Endothelial cell of umbilical vein (primary cell): ENCODE measurements at regions of chr19 and their contacts with region 1.

Region 1: DNA sequence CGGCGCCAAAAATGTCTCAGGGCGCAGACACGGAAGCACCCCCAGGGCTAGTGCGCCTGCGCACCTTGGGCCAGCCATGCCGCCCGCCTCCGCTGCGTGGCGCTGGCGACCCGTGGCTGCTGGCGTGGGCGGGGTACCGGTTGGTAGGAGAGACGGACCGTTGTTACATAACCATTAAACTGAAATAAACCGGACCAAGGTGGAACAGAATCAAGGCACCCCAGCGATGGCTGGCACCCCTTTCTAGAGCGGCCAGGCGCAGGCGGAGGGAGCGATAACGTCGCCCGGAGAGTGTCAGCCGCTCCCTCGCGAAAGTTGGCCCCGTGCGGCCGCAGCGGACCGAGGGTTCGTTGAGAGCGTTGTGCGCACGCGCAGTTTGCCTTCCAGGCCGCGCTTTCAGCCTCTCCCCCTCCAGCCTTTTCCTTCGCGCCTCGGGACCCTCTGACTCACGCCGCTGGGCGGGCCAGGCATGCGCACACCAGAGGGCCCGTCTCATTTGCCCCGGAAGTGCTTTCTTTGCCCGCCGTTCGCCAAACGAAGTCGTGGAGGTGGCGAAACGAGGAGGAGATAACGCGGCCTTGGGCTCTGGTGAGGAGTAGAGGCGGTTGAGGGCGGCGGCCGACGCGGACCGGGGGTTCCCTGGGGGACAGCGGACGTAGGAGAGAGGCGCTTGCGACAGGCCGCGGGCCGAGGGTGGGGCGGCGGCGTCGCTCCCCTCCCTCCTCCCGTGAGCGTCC is at the starts of genes PLEKHJ1 and SF3A2:
- DNase-seq: peak; percentile 99
- H3K4me3 ChIP-seq: peak within 1 kb of the TSS; percentile 56 to 86 (median 80)
- H3K27ac ChIP-seq: peak within 1 kb of the TSS; percentile 66
- H3K4me1 ChIP-seq: peaks cover 41% of the 10 kb centered on the region
- H3K27me3 ChIP-seq: no peaks in the 10 kb centered on the region
- CTCF ChIP-seq: peak; percentile 99
- POLR2A ChIP-seq: peak; percentile 71
- total RNA-seq, gene PLEKHJ1: 73.4 and 82.4 TPM in 2 replicates
- total RNA-seq, gene SF3A2: 140 and 164 TPM in 2 replicates

Region 2: GRCh38 chr19:2253106-2254053 is 16.9 kb after region 1 on chr19:
- CTCF ChIA-PET with region 1: interaction called, 13 read pairs
- POLR2A ChIA-PET with region 1: interaction called, 3 read pairs
- dilution Hi-C with region 1: no loop called
- intact Hi-C with region 1: loop called (anchors 1 kb)
- DNase-seq: no peak
- H3K4me3 ChIP-seq: no peak overlapping the region
- H3K27ac ChIP-seq: no peak overlapping the region
- H3K4me1 ChIP-seq: peaks cover 11% of the 10 kb centered on the region
- H3K27me3 ChIP-seq: peaks cover 22 to 40% of the 10 kb centered on the region in 2 experiments
- CTCF ChIP-seq: peak in 1 of 2 donors; percentile 45
- POLR2A ChIP-seq: no peak

Region 3: GRCh38 chr19:2269244-2269947 is 32.9 kb after region 1 on chr19:
- CTCF ChIA-PET with region 1: interaction called, 17 read pairs
- POLR2A ChIA-PET with region 1: interaction called, 4 read pairs
- dilution Hi-C with region 1: no loop called
- intact Hi-C with region 1: loop called (anchors 1 kb)
- DNase-seq: peak; percentile 95
- H3K4me3 ChIP-seq: peak overlapping the region; percentile 66 to 95 (median 92)
- H3K27ac ChIP-seq: peak overlapping the region; percentile 57
- H3K4me1 ChIP-seq: peaks cover 38% of the 10 kb centered on the region
- H3K27me3 ChIP-seq: no peaks in the 10 kb centered on the region
- CTCF ChIP-seq: no peak
- POLR2A ChIP-seq: peak; percentile 99

Region 4: GRCh38 chr19:2289714-2290435 is 53.4 kb after region 1 on chr19:
- CTCF ChIA-PET with region 1: no interaction called
- POLR2A ChIA-PET with region 1: no interaction called
- dilution Hi-C with region 1: no loop called
- intact Hi-C with region 1: no loop called
- DNase-seq: no peak
- H3K4me3 ChIP-seq: no peak overlapping the region
- H3K27ac ChIP-seq: no peak overlapping the region
- H3K4me1 ChIP-seq: peaks cover 5% of the 10 kb centered on the region
- H3K27me3 ChIP-seq: peaks cover 43 to 48% of the 10 kb centered on the region in 2 experiments
- CTCF ChIP-seq: no peak
- POLR2A ChIP-seq: no peak

Region 5: DNA sequence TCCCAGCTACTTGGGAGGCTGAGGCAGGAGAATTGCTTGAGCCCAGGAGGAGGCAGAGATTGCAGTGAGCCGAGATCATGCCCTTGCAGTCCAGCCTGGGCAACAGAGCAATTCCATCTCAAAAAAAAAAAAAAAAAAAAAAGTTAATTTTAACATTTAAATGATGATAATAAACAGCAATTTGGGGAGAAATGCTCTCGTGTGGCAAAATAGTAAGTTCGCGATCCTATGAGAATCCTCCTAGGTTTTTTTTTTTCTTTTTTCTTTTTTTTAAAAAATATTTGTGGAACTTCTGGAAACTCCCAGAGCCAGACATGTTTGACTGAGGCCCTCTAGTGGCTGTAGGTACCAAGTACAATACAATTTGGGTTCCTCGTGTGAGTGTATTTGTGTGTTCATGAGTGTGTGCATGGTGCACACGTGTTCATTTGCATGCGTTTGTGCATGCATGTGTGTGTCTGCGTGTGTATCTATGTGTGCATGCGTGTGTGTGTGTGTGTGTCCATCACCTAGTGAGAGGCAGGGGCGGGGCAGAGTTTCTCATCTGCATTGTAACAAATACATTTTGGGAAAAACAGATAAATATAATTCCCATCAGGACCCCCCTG is 154.7 kb after region 1 on chr19:
- CTCF ChIA-PET with region 1: interaction called, 5 read pairs
- POLR2A ChIA-PET with region 1: no interaction called
- dilution Hi-C with region 1: no loop called
- intact Hi-C with region 1: loop called (anchors 1 kb)
- DNase-seq: peak; percentile 73
- H3K4me3 ChIP-seq: no peak overlapping the region
- H3K27ac ChIP-seq: no peak overlapping the region
- H3K4me1 ChIP-seq: no peaks in the 10 kb centered on the region
- H3K27me3 ChIP-seq: peaks cover 3 to 4% of the 10 kb centered on the region in 2 experiments
- CTCF ChIP-seq: peak; percentile 60 to 67
- POLR2A ChIP-seq: no peak

Region 6: DNA sequence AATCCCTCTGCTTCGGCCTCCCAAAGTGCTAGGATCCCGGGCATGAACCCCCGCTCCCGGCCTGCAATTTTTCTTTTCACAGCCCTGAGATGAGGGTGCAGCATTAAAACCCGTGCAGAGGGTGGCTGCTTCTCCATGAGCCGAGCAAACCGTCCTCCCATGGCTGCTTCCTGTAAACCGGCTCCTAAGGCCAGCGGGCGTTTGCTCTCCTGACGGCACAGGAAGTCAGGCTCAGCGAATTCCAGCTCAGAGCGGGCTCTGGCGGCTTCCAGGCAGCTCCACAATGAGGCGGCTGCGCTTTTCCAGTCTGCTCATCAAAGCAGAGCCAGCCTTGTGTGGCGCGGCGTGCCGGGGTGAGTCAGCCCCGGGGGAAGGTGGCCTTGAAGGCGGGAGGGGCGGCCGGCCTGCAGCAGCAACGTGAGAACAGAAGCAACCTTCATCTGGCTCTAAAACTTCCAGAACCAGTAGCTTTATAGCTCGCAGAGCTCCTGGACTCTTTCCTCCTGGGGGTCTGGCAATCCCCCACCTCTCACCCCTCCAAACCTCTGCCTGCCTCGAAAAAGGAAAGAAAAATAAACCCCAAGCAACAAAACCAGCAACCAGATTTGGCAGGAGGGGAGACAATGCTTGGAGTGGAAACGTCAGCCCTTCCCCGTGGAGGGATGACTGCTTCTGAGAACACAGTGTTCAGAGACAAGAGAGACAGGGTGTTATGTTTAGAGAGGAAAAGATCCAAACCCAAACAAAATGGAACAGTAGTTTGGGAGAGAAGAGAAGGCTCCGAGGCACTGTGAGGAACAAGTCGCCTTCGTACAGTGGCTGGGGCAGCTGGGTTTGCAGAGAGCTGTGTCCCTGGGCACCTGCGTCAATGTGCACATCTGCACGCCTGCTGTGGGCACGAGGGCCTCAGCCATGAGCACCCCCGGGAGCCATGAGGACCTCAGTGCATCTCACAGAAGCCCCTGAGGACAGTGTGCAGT is 307.3 kb after region 1 on chr19:
- CTCF ChIA-PET with region 1: no interaction called
- POLR2A ChIA-PET with region 1: no interaction called
- dilution Hi-C with region 1: no loop called
- intact Hi-C with region 1: loop called (anchors 5 kb)
- DNase-seq: peak; percentile 97
- H3K4me3 ChIP-seq: peak overlapping the region in 1 of 3 experiments; percentile 20
- H3K27ac ChIP-seq: peak overlapping the region; percentile 99
- H3K4me1 ChIP-seq: peaks cover 58% of the 10 kb centered on the region
- H3K27me3 ChIP-seq: no peaks in the 10 kb centered on the region
- CTCF ChIP-seq: peak; percentile 22 to 46
- POLR2A ChIP-seq: peak; percentile 55

Region 7: DNA sequence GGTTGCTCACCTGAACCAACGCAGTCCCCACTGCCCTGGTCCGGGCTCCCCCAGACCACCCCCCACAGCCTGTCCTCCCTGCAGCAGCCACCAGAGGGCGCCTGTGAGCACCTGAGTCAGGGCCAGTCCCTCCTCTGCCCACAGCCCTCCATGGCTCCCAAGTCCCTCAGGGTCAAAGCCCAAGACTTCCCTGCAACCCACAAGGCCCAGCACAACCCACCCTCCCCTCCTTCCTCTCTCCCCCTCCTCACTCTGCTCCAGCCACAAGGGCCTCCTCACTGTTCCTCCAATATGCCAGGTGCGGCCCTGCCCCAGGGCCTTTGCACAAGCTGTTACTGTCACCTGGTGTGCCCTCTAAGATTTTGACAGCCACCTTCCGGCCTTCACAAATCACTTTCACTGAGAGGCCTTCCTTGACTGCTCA is 910.2 kb after region 1 on chr19:
- CTCF ChIA-PET with region 1: no interaction called
- POLR2A ChIA-PET with region 1: no interaction called
- dilution Hi-C with region 1: no loop called
- intact Hi-C with region 1: no loop called
- DNase-seq: no peak
- H3K4me3 ChIP-seq: no peak overlapping the region
- H3K27ac ChIP-seq: no peak overlapping the region
- H3K4me1 ChIP-seq: peaks cover 13% of the 10 kb centered on the region
- H3K27me3 ChIP-seq: no peaks in the 10 kb centered on the region
- CTCF ChIP-seq: peak; percentile 83 to 94
- POLR2A ChIP-seq: no peak